CD4-positive, alpha-beta T cell (primary cell): ENCODE measurements at regions of chrX and their contacts with region 1.

Region 1: GRCh38 chrX:150693775-150694574 is 779 bp downstream of the MTMR1 start:
- DNase-seq: peak; percentile 20 to 87 (median 58)
- ATAC-seq: peak; percentile 24
- H3K4me3 ChIP-seq: peak overlapping the region; percentile 60
- H3K4me3 Mint-ChIP-seq: peak overlapping the region; percentile 98
- H3K27ac ChIP-seq: peak overlapping the region; percentile 72 to 82
- H3K27ac Mint-ChIP-seq: peak overlapping the region; percentile 99
- H3K4me1 ChIP-seq: peaks cover 70% of the 10 kb centered on the region
- H3K4me1 Mint-ChIP-seq: peaks cover 61% of the 10 kb centered on the region
- H3K27me3 ChIP-seq: no peaks in the 10 kb centered on the region
- H3K27me3 Mint-ChIP-seq: no peaks in the 10 kb centered on the region
- CTCF ChIP-seq: no peak

Region 2: DNA sequence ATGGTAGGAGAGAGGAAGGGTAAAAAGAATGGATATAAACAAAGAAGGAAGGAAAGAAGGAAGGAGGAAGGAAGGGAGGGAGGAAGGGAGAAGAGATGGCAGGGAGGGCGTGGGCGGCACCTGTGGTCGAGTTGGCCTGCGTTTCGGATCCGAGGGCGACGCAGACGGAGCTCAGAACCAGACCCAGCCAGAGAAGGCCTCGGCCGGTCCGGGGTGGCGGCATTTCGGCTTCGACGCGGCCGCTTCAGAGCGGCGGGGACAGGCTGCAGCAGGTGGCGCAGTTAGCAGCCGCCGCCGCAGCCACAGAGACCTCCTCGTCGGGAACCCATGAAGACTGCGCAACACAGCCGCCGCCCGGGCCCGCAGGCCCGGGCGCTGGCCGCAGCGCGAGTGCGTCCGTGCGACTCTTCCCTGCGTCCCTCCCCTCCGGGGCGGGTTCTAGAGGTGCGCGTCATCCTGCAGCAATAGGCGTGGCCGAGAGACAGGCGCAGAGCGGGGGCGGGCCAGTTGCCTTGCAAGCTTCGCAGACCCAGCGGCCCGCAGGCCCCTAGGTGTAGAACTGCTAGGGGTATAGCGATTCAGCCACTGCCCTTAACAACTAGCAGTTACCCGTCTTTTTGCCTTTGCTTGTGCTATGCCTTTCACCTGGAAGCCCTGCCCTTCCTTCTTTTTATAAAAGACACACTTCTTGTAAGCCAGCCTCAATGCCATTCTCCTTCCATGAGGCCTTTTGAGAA is 1188.9 kb before region 1 on chrX and contains the start of gene IDS:
- CTCF ChIA-PET with region 1: no interaction called
- POLR2A ChIA-PET with region 1: no interaction called
- intact Hi-C with region 1: loop called in 1 of 2 experiments (anchors 10 kb)
- DNase-seq: peak; percentile 69 to 95 (median 84)
- ATAC-seq: peak; percentile 64
- H3K4me3 ChIP-seq: peak within 1 kb of the TSS; percentile 82
- H3K4me3 Mint-ChIP-seq: peak within 1 kb of the TSS; percentile 99
- H3K27ac ChIP-seq: peak within 1 kb of the TSS; percentile 87 to 97
- H3K27ac Mint-ChIP-seq: peak within 1 kb of the TSS; percentile 95
- H3K4me1 ChIP-seq: peaks cover 45% of the 10 kb centered on the region
- H3K4me1 Mint-ChIP-seq: peaks cover 35% of the 10 kb centered on the region
- H3K27me3 ChIP-seq: no peaks in the 10 kb centered on the region
- H3K27me3 Mint-ChIP-seq: peaks cover under 1% of the 10 kb centered on the region
- CTCF ChIP-seq: no peak
- total RNA-seq, gene IDS: 256 to 260 TPM

Region 3: GRCh38 chrX:149938427-149939270 is 755.3 kb before region 1 on chrX and contains the start of gene EOLA2:
- CTCF ChIA-PET with region 1: no interaction called
- POLR2A ChIA-PET with region 1: interaction called, 40 read pairs
- intact Hi-C with region 1: no loop called
- DNase-seq: peak; percentile 83 to 98 (median 90)
- ATAC-seq: peak; percentile 47
- H3K4me3 ChIP-seq: peak within 1 kb of the TSS; percentile 93
- H3K4me3 Mint-ChIP-seq: peak within 1 kb of the TSS; percentile 94
- H3K27ac ChIP-seq: peak within 1 kb of the TSS; percentile 82 to 97
- H3K27ac Mint-ChIP-seq: peak within 1 kb of the TSS; percentile 84
- H3K4me1 ChIP-seq: peaks cover 15% of the 10 kb centered on the region
- H3K4me1 Mint-ChIP-seq: no peaks in the 10 kb centered on the region
- H3K27me3 ChIP-seq: no peaks in the 10 kb centered on the region
- H3K27me3 Mint-ChIP-seq: no peaks in the 10 kb centered on the region
- CTCF ChIP-seq: peak; percentile 34
- total RNA-seq, gene EOLA2: 48.7 to 54.7 TPM

Region 4: DNA sequence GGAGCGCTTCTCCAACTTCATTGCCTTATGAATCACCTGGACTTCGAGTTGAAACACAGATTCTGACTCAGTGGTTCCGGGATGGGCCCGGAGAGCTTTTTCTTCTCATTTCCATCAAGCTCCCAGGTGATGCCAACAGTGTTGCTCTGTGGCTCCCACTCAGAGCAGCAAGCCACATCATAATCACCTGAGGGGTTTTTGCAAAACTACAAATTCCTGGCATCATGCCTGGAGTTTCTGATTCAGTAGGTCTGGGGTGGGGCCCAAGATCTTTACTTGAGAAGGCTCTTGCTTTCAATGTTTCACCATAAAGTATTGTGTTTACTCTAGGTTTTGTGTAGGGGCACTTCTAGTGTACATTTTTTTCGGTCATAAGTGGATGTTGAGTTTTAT is 118.6 kb before region 1 on chrX:
- CTCF ChIA-PET with region 1: no interaction called
- POLR2A ChIA-PET with region 1: no interaction called
- intact Hi-C with region 1: loop called in 1 of 2 experiments (anchors 10 kb)
- DNase-seq: peak in 13 of 14 experiments; percentile 9 to 80 (median 37)
- ATAC-seq: peak; percentile 78
- H3K4me3 ChIP-seq: peak overlapping the region; percentile 33
- H3K4me3 Mint-ChIP-seq: peak overlapping the region; percentile 98
- H3K27ac ChIP-seq: peak overlapping the region; percentile 27 to 45
- H3K27ac Mint-ChIP-seq: peak overlapping the region; percentile 95
- H3K4me1 ChIP-seq: peaks cover 48% of the 10 kb centered on the region
- H3K4me1 Mint-ChIP-seq: peaks cover 88% of the 10 kb centered on the region
- H3K27me3 ChIP-seq: no peaks in the 10 kb centered on the region
- H3K27me3 Mint-ChIP-seq: no peaks in the 10 kb centered on the region
- CTCF ChIP-seq: no peak

Region 5: GRCh38 chrX:150704030-150704613 is 10.1 kb after region 1 on chrX:
- CTCF ChIA-PET with region 1: interaction called, 6 read pairs
- POLR2A ChIA-PET with region 1: interaction called, 14 read pairs
- intact Hi-C with region 1: no loop called
- DNase-seq: no peak
- ATAC-seq: no peak
- H3K4me3 ChIP-seq: no peak overlapping the region
- H3K4me3 Mint-ChIP-seq: no peak overlapping the region
- H3K27ac ChIP-seq: no peak overlapping the region
- H3K27ac Mint-ChIP-seq: peak overlapping the region; percentile 63
- H3K4me1 ChIP-seq: peaks cover 8% of the 10 kb centered on the region
- H3K4me1 Mint-ChIP-seq: peaks cover 27% of the 10 kb centered on the region
- H3K27me3 ChIP-seq: no peaks in the 10 kb centered on the region
- H3K27me3 Mint-ChIP-seq: no peaks in the 10 kb centered on the region
- CTCF ChIP-seq: no peak

Region 6: GRCh38 chrX:151042842-151043241 is 348.9 kb after region 1 on chrX:
- CTCF ChIA-PET with region 1: no interaction called
- POLR2A ChIA-PET with region 1: no interaction called
- intact Hi-C with region 1: no loop called
- DNase-seq: peak in 1 of 14 experiments; percentile 3
- ATAC-seq: no peak
- H3K4me3 ChIP-seq: no peak overlapping the region
- H3K4me3 Mint-ChIP-seq: no peak overlapping the region
- H3K27ac ChIP-seq: no peak overlapping the region
- H3K27ac Mint-ChIP-seq: no peak overlapping the region
- H3K4me1 ChIP-seq: no peaks in the 10 kb centered on the region
- H3K4me1 Mint-ChIP-seq: no peaks in the 10 kb centered on the region
- H3K27me3 ChIP-seq: no peaks in the 10 kb centered on the region
- H3K27me3 Mint-ChIP-seq: peaks cover 5% of the 10 kb centered on the region
- CTCF ChIP-seq: no peak